ENCODE measurements at regions of chr1 and their contacts with region 1.

Region 1: GRCh38 chr1:159197561-159198557 is 6.8 kb upstream of the ACKR1 start:
- DNase-seq: peak; percentile 73
- H3K4me3 ChIP-seq: no peak overlapping the region
- H3K27ac ChIP-seq: no peak overlapping the region
- H3K4me1 ChIP-seq: no peaks in the 10 kb centered on the region
- H3K27me3 ChIP-seq: no peaks in the 10 kb centered on the region
- CTCF ChIP-seq: peak; percentile 75

Region 2: GRCh38 chr1:159161001-159161718 is 36.7 kb before region 1 on chr1:
- intact Hi-C with region 1: loop called (anchors 5 kb)
- DNase-seq: peak; percentile 60
- H3K4me3 ChIP-seq: no peak overlapping the region
- H3K27ac ChIP-seq: no peak overlapping the region
- H3K4me1 ChIP-seq: no peaks in the 10 kb centered on the region
- H3K27me3 ChIP-seq: no peaks in the 10 kb centered on the region
- CTCF ChIP-seq: peak; percentile 87